Activated CD4-positive, alpha-beta T cell treated with anti-CD3 and anti-CD28 coated beads, Interleukin-2, amount 10 ng/mL, durations not matched to agents 24 days and 14 days (primary cell): ENCODE measurements at regions of chr6 and their contacts with region 1.

Region 1: GRCh38 chr6:111873178-111874024 is at the start of gene FYN:
- DNase-seq: peak; percentile 100
- H3K4me3 Mint-ChIP-seq: peak within 1 kb of the TSS; percentile 99
- H3K27ac Mint-ChIP-seq: peak within 1 kb of the TSS; percentile 96
- H3K4me1 Mint-ChIP-seq: peaks cover 34% of the 10 kb centered on the region
- H3K27me3 Mint-ChIP-seq: peaks cover 2% of the 10 kb centered on the region
- total RNA-seq, gene FYN: 331 and 341 TPM in 2 replicates

Region 2: DNA sequence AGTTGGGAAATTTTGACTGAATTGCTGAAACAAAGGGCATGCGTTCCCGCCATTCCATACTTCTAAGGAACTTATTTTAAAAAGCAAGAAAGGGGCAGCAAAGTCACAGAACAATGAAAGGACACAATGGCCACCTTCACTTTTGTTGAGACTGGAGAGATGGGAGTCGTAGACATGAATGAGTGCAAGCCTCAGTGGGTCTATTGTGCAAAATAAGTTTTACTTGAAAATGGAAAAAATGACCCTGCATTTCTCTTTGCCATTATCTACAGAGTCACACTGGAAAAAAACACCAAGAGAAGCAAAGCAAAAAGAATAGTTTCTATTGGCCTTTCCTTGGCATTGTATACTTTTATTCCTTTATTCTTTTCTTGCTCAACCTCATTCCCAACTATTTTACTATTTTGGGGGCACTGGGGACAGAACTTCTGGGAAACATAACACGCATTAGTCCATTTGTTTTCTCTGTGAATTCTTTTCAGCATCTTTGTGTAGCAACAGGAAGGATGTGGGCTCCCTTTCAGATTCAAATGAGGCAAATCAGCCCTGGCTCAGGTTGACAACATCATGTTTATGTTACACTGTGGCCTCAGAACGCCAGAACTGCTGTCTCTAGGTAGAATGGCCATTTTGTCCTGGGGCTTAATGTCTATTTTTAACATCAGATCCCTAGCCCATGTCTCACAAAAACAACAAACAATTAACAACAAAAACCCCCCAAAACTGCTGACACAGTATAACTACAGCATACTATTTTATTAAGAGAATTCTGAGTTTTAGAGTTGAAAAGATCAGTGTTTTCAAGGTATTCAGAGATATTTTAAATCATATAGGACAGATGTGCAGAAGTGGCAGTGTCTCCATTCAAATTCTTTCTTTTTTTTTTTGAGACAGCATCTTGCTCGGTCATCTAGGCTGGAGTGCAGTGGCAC is 122.4 kb before region 1 on chr6:
- intact Hi-C with region 1: loop called (anchors 2 kb)
- DNase-seq: peak; percentile 91
- H3K4me3 Mint-ChIP-seq: peak overlapping the region; percentile 77
- H3K27ac Mint-ChIP-seq: peak overlapping the region; percentile 99
- H3K4me1 Mint-ChIP-seq: peaks cover 83% of the 10 kb centered on the region
- H3K27me3 Mint-ChIP-seq: no peaks in the 10 kb centered on the region

Region 3: GRCh38 chr6:111823831-111824607 is 49.4 kb before region 1 on chr6:
- intact Hi-C with region 1: loop called (anchors 1 kb)
- DNase-seq: peak; percentile 71
- H3K4me3 Mint-ChIP-seq: peak overlapping the region; percentile 67
- H3K27ac Mint-ChIP-seq: peak overlapping the region; percentile 91
- H3K4me1 Mint-ChIP-seq: peaks cover 70% of the 10 kb centered on the region
- H3K27me3 Mint-ChIP-seq: no peaks in the 10 kb centered on the region

Region 4: DNA sequence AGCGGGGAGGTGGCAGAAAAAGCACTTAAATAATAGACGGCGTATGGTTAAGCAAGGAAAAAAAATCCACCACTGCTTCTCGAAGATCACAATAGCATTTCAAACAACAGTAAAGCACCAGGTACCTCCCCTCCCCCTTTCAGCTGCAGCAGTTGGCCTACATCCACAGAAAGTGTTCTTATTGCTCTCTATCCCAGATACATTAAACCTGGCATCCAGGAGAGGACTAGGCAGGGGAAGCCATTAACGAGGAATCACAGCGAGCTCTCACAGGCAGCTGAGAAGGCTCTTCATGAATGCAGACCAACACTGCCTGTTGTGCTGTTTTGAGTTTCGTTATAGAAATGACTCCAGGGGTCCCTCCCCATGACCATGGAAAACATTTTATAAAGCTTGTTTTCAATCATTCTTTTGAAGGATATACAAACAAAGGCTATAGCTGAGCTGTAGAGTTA is 11.9 kb before region 1 on chr6:
- intact Hi-C with region 1: loop called (anchors 1 kb)
- DNase-seq: peak; percentile 55
- H3K4me3 Mint-ChIP-seq: no peak overlapping the region
- H3K27ac Mint-ChIP-seq: peak overlapping the region; percentile 23
- H3K4me1 Mint-ChIP-seq: peaks cover 91% of the 10 kb centered on the region
- H3K27me3 Mint-ChIP-seq: no peaks in the 10 kb centered on the region

Region 5: GRCh38 chr6:112037783-112038216 is 164.4 kb after region 1 on chr6:
- intact Hi-C with region 1: loop called (anchors 2 kb)
- DNase-seq: no peak
- H3K4me3 Mint-ChIP-seq: no peak overlapping the region
- H3K27ac Mint-ChIP-seq: peak overlapping the region; percentile 9
- H3K4me1 Mint-ChIP-seq: peaks cover 48% of the 10 kb centered on the region
- H3K27me3 Mint-ChIP-seq: no peaks in the 10 kb centered on the region